PC-3 (cell line): ENCODE measurements at regions of chr6 and their contacts with region 1.

Region 1: GRCh38 chr6:16747232-16748024 is 13.8 kb downstream of the ATXN1 start:
- DNase-seq: peak; percentile 77
- ATAC-seq: peak; percentile 79
- H3K4me3 ChIP-seq: peak overlapping the region; percentile 8; the same call in 1 of the 2 replicates
- H3K27ac ChIP-seq: peak overlapping the region; percentile 98
- H3K4me1 ChIP-seq: peaks cover 69% of the 10 kb centered on the region
- H3K27me3 ChIP-seq: no peaks in the 10 kb centered on the region
- CTCF ChIP-seq: no peak

Region 2: DNA sequence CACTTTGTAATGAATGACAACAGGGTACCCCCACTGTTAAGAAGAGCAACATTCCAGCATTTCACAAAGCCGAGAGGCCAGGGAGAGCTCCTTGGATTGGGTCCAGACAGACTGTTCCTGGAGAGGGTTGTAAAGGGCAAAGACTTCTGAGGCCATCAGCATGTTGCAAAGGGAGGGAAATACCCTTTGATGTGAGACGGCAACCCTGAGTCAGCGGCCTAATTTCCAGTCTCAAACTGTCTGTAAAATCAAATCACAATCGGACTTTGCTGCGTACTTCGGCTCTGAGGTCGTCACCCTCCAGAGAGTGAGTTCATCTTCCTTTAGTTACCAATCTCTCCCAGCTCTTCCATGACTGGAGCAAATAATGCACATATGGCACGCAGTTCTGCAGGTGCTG is 983.6 kb before region 1 on chr6:
- CTCF ChIA-PET with region 1: no interaction called
- POLR2A ChIA-PET with region 1: interaction called, 11 read pairs
- intact Hi-C with region 1: no loop called
- DNase-seq: peak; percentile 17
- ATAC-seq: no peak
- H3K4me3 ChIP-seq: no peak overlapping the region
- H3K27ac ChIP-seq: no peak overlapping the region
- H3K4me1 ChIP-seq: peaks cover 5% of the 10 kb centered on the region; the same call in 1 of the 2 replicates
- H3K27me3 ChIP-seq: no peaks in the 10 kb centered on the region; the same call in 1 of the 2 replicates
- CTCF ChIP-seq: no peak

Region 3: DNA sequence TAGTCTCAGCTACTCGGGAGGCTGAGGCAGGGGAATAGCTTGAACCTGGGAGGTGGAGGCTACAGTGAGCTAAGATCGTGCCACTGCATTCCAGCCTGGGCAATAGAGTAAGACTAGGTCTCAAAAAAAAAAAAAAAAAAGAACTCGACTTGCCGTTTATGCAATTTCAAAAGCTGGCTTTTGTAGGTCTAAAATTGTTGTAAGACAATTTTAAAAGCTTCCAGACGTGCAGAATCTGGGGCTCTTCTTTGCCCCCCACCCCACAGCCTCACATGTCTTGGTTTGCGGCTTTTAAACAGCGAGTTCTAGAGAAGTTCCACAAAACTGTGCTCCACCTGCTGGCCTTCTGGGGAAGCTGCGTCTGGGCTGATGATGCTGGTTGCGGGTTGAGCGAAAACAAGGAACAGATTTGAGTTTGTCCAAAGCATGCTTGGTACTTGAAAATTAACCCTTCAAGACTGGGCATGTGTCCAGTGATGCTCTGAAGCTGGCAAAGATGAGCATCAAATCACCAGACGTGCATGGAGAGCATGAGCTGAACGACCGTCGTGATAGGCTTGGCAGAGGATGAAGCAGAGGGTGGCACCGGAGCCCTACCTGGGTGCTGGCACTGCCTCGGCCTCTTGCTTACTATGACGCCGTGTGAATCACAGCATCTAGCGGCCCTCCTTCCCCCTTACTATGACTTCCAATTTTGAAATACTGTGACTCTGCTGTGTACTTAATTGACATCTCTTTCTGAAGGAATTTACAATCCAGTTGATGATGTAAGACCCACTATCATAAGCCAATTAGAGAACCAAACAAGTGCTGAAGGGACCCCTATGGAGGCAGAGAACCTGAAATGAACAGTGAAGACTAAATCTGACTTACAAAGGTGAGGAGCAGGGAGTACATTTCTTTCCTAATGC is 337.6 kb before region 1 on chr6:
- CTCF ChIA-PET with region 1: no interaction called
- POLR2A ChIA-PET with region 1: no interaction called
- intact Hi-C with region 1: loop called (anchors 1 kb)
- DNase-seq: peak; percentile 83
- ATAC-seq: peak; percentile 97
- H3K4me3 ChIP-seq: peak overlapping the region; percentile 54
- H3K27ac ChIP-seq: peak overlapping the region; percentile 10; the same call in 1 of the 2 replicates
- H3K4me1 ChIP-seq: peaks cover 15% of the 10 kb centered on the region
- H3K27me3 ChIP-seq: no peaks in the 10 kb centered on the region
- CTCF ChIP-seq: peak; percentile 94

Region 4: DNA sequence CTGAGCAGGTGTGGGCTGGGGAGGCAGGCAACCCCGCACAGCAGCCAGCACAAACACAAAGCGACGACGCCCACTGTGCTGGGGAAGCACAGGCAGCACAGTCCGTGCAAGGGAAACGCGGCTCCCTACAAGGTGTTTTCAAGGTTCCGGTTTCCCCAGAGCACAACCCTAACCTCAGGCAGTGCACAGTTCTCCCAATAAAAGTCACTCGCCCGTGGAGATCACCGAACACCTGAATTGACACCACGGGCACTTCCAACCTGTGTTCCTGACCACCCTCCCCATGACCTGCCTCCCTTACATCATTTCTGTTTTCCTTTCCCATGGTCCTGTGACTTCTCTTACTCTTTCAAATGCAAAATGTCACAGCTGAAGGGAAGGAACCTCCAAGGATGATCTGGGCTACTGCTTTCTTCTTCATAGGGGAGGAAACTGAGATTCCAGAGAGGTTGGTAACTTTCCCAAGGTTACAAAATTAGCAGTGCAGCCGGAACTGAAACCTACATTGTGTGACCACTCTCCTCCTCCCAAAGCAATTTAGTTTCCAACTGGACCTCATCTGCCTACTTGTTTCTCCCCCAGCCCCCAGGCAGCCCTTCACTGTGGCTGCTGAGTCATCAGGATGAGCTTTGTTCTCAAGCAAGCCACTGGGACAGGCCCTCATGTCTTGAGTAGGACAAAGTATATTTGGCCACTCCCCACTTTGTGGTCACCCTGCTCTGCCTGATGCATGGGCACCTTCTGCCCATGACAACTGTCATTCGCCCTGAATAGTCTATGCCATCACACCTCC is 111.4 kb before region 1 on chr6:
- CTCF ChIA-PET with region 1: no interaction called
- POLR2A ChIA-PET with region 1: interaction called, 11 read pairs
- intact Hi-C with region 1: no loop called
- DNase-seq: peak; percentile 91
- ATAC-seq: peak; percentile 76
- H3K4me3 ChIP-seq: peak overlapping the region; percentile 43
- H3K27ac ChIP-seq: peak overlapping the region; percentile 91
- H3K4me1 ChIP-seq: peaks cover 47% of the 10 kb centered on the region
- H3K27me3 ChIP-seq: no peaks in the 10 kb centered on the region
- CTCF ChIP-seq: no peak

Region 5: DNA sequence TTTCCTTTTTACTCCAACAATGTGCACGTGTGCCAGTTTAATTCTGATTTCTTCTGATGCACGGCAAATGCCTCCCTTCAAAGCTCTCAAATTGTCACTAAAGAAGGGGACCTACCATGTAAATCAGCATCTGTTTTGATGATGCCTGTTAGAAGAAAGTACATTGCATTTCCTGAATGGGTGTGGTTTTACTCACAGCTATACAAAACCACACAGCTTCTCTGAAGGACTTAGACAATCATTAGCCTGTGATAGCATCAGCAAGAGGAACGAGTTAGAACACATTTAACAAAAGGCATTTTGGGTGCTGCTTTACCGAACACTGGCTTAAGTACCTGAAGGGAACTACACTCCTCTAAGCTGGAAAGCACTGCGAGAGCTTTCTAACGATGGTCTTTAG is 95.6 kb before region 1 on chr6:
- CTCF ChIA-PET with region 1: no interaction called
- POLR2A ChIA-PET with region 1: no interaction called
- intact Hi-C with region 1: no loop called
- DNase-seq: no peak
- ATAC-seq: no peak
- H3K4me3 ChIP-seq: no peak overlapping the region
- H3K27ac ChIP-seq: no peak overlapping the region
- H3K4me1 ChIP-seq: peaks cover 6% of the 10 kb centered on the region; the same call in 1 of the 2 replicates
- H3K27me3 ChIP-seq: no peaks in the 10 kb centered on the region
- CTCF ChIP-seq: no peak

Region 6: GRCh38 chr6:16669227-16669626 is 78.2 kb before region 1 on chr6:
- CTCF ChIA-PET with region 1: no interaction called
- POLR2A ChIA-PET with region 1: no interaction called
- intact Hi-C with region 1: loop called (anchors 2 kb)
- DNase-seq: peak; percentile 93
- ATAC-seq: peak; percentile 86
- H3K4me3 ChIP-seq: no peak overlapping the region
- H3K27ac ChIP-seq: peak overlapping the region; percentile 82
- H3K4me1 ChIP-seq: peaks cover 42% of the 10 kb centered on the region
- H3K27me3 ChIP-seq: no peaks in the 10 kb centered on the region
- CTCF ChIP-seq: no peak

Region 7: DNA sequence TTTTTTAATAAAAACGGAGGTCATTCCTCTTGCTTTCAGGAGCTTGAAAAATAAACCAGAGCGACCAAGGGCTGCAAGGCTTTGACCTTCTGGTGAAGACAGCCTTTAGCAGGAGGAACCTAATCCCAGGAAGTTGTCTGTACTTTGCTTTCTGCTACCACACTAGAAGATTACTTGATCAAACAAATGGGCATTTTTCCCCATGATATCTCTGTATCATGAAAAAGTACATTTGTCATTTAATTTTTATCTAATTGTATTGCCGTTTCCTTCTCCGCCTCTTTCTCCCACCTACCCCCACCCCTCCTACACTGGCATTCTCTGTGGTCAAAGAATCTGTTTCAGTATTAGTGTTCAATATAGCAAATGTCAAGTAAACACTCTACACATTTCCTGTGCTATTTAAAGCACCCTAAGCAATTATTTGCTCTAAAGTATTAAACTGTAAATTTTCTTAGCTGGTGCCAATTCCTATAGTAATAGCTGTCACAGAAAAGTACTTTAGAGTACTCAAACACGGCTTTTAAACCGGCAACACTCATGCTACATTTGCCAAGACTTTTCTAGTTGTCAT is 15.9 kb before region 1 on chr6:
- CTCF ChIA-PET with region 1: interaction called, 7 read pairs
- POLR2A ChIA-PET with region 1: interaction called, 6 read pairs
- intact Hi-C with region 1: loop called (anchors 2 kb)
- DNase-seq: peak; percentile 30
- ATAC-seq: peak; percentile 51
- H3K4me3 ChIP-seq: no peak overlapping the region
- H3K27ac ChIP-seq: 0 out of 2 replicates have a peak overlapping the region, but pooled peaks have one; percentile 4
- H3K4me1 ChIP-seq: peaks cover 57% of the 10 kb centered on the region
- H3K27me3 ChIP-seq: no peaks in the 10 kb centered on the region
- CTCF ChIP-seq: no peak

Region 8: GRCh38 chr6:16947375-16948015 is 200.1 kb after region 1 on chr6:
- CTCF ChIA-PET with region 1: no interaction called
- POLR2A ChIA-PET with region 1: no interaction called
- intact Hi-C with region 1: no loop called
- DNase-seq: peak; percentile 86
- ATAC-seq: peak; percentile 96
- H3K4me3 ChIP-seq: peak overlapping the region; percentile 20; the same call in 1 of the 2 replicates
- H3K27ac ChIP-seq: peak overlapping the region; percentile 90
- H3K4me1 ChIP-seq: peaks cover 22% of the 10 kb centered on the region
- H3K27me3 ChIP-seq: no peaks in the 10 kb centered on the region
- CTCF ChIP-seq: no peak